Endothelial cell of umbilical vein (primary cell): ENCODE measurements at regions of chr18 and their contacts with region 1.

Region 1: DNA sequence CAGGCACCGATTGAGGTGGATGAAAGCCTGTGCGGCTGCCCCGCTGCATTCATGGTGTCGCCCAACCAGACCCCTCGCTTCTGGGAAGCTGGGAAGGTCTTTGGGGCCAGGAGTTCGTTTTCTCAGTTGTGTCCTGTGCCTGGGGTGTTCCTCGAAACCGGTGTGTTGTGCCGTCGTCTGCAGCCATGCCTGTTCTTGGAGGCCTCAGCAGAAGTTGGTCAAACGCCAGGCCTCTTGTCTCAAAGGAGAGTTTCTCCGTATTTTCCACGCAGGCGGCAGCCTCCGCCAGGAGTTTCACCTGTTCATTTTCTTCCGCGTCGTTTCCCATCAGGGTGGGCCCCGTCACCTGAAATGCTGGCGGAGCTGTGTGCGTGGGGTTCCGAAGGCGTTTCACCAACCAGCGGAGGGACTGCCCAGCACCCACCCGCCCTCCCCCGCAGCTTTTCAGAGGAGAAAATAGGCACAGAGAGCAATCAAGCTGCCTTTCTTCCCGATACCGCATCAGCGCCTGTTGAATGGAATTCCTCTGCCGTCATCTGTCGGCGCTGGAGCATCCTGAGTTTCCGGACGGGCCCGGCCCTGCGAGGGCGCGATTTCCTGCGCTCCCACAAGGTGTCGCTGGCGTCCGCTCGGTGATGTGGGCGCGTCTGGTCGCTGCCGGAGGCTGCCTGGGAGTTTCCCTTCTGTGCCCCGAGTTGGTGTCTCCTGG is 17.0 kb upstream of the NFATC1 start:
- DNase-seq: peak; percentile 74
- H3K4me3 ChIP-seq: no peak overlapping the region
- H3K27ac ChIP-seq: no peak overlapping the region
- H3K4me1 ChIP-seq: no peaks in the 10 kb centered on the region
- H3K27me3 ChIP-seq: no peaks in the 10 kb centered on the region
- CTCF ChIP-seq: peak; percentile 99
- POLR2A ChIP-seq: no peak

Region 2: GRCh38 chr18:79077181-79077580 is 301.5 kb before region 1 on chr18:
- CTCF ChIA-PET with region 1: no interaction called
- POLR2A ChIA-PET with region 1: no interaction called
- dilution Hi-C with region 1: no loop called
- intact Hi-C with region 1: no loop called
- DNase-seq: no peak
- H3K4me3 ChIP-seq: no peak overlapping the region
- H3K27ac ChIP-seq: no peak overlapping the region
- H3K4me1 ChIP-seq: no peaks in the 10 kb centered on the region
- H3K27me3 ChIP-seq: no peaks in the 10 kb centered on the region
- CTCF ChIP-seq: no peak
- POLR2A ChIP-seq: no peak

Region 3: GRCh38 chr18:79367989-79368388 is 10.7 kb before region 1 on chr18:
- CTCF ChIA-PET with region 1: interaction called, 13 read pairs
- POLR2A ChIA-PET with region 1: no interaction called
- dilution Hi-C with region 1: no loop called
- intact Hi-C with region 1: no loop called
- DNase-seq: no peak
- H3K4me3 ChIP-seq: no peak overlapping the region
- H3K27ac ChIP-seq: no peak overlapping the region
- H3K4me1 ChIP-seq: peaks cover 9% of the 10 kb centered on the region
- H3K27me3 ChIP-seq: no peaks in the 10 kb centered on the region
- CTCF ChIP-seq: no peak
- POLR2A ChIP-seq: no peak

Region 4: GRCh38 chr18:79507076-79507545 is 128.4 kb after region 1 on chr18:
- CTCF ChIA-PET with region 1: interaction called, 10 read pairs
- POLR2A ChIA-PET with region 1: no interaction called
- dilution Hi-C with region 1: no loop called
- intact Hi-C with region 1: no loop called
- DNase-seq: peak; percentile 96
- H3K4me3 ChIP-seq: no peak overlapping the region
- H3K27ac ChIP-seq: peak overlapping the region; percentile 88
- H3K4me1 ChIP-seq: peaks cover 31% of the 10 kb centered on the region
- H3K27me3 ChIP-seq: no peaks in the 10 kb centered on the region
- CTCF ChIP-seq: no peak
- POLR2A ChIP-seq: peak; percentile 66

Region 5: DNA sequence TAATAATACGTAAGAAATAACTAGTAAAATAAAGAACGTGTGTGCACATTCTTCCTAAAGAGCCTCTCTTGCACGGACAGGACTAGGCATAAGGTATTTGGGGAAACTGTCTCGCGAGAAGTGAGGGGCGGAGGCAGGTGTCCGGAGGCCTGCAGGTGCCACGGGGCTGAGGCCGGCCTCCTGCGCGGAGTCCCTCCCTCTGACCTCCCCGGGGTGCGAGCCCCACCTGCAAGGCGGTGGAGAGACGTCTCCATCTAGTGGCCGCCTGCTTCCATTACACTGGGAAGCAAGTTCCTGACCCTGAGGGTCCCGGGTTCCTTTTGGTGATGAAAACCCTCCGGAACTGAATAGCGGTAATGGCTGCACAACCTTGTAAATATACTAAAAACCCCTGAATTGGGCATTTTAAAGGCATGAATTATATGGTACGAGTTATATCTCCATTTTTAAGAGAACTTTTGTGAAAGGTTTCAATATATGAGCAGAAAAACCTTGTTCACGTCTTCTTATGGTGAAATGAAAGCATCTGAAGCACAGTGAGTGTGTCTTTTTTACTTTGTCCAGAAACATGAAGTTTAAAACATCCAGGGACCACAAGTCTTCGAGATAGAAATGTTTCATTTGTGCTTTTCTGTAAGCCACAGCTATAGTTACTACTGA is 265.4 kb after region 1 on chr18:
- CTCF ChIA-PET with region 1: interaction called, 41 read pairs
- POLR2A ChIA-PET with region 1: no interaction called
- dilution Hi-C with region 1: no loop called
- intact Hi-C with region 1: loop called (anchors 1 kb)
- DNase-seq: peak; percentile 49
- H3K4me3 ChIP-seq: no peak overlapping the region
- H3K27ac ChIP-seq: no peak overlapping the region
- H3K4me1 ChIP-seq: no peaks in the 10 kb centered on the region
- H3K27me3 ChIP-seq: no peaks in the 10 kb centered on the region
- CTCF ChIP-seq: peak; percentile 89 to 90
- POLR2A ChIP-seq: no peak

Region 6: GRCh38 chr18:79988451-79989194 is 609.9 kb after region 1 on chr18 and contains the start of gene TXNL4A:
- CTCF ChIA-PET with region 1: no interaction called
- POLR2A ChIA-PET with region 1: no interaction called
- dilution Hi-C with region 1: no loop called
- intact Hi-C with region 1: loop called (anchors 5 kb)
- DNase-seq: peak; percentile 88
- H3K4me3 ChIP-seq: peak within 1 kb of the TSS; percentile 69 to 96 (median 96)
- H3K27ac ChIP-seq: peak within 1 kb of the TSS; percentile 43
- H3K4me1 ChIP-seq: peaks cover 13% of the 10 kb centered on the region
- H3K27me3 ChIP-seq: no peaks in the 10 kb centered on the region
- CTCF ChIP-seq: no peak
- POLR2A ChIP-seq: peak; percentile 96
- total RNA-seq, gene TXNL4A: 147 and 148 TPM in 2 replicates